Motor neuron (in vitro differentiated cells): ENCODE measurements at regions of chr9 and their contacts with region 1.

Region 1: DNA sequence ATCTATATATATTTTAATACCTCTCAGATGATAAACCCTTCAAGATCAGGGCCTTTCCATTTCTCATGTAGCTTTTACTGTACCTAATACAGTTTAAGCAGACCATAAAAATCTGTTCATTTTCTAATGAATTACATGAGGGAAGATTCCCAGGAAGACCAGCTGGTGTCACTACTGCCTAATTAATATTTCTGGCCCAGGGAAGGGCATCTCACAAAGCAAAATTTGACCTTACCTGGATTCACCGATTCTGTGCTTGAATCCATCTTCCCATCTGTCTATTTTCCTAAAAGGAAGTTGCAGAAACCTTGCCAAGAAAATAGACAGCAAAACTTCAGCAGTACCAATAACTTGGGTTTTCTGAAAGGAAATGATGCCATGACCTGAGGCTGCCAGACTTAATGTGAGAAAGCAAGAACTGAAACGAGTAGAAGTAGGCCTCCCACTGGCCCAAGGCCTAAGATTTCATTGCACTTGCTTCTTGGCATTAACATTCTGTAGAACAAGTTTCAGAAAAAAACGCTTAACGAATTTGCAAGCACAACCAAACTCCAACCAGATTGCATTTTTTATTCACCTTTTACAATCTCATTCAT is 83.0 kb upstream of the GLIS3 start:
- ATAC-seq: peak in 3 of 8 experiments; percentile 28 to 55 (median 29)
- H3K4me3 ChIP-seq: no peak overlapping the region
- H3K27ac ChIP-seq: no peak overlapping the region
- H3K4me1 ChIP-seq: no peaks in the 10 kb centered on the region

Region 2: DNA sequence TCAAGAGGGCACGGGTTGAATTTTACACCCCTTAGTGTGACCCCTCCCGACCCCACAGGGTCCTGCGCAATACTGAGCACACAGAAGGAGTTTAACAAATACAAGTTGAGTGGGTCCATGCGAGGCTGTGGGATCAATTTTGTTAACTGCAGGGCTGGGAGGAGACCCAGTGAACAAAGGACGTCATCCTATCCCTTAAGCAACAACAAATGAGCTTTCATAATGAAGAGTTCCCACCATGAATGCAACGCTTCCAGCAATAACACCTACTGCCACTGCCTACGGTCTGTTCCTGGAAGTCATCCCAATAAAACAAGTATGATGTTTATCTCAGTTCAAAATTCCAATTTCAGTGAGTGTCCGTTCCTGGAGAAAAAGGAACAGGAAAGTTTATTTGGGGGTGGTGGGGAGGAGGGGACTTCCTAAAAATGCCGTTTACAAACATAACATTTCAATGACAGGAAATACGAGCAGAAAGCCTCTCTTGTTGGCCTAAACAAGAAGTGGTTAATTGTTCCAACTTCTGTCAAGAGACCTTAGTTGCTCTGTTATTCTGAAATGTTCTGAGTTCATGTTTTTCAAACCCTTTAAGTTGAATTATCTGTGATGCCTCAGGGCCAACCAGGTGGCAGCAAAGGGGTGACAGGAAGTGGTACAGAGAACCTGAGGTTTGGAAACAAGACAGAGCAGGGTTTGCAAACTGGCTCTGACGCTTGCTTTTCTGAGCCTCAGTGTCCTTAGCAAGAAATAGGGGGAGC is 213.5 kb after region 1 on chr9:
- in situ Hi-C with region 1: loop called in 1 of 9 experiments (anchors 25 kb)
- ATAC-seq: no peak
- H3K4me3 ChIP-seq: no peak overlapping the region
- H3K27ac ChIP-seq: no peak overlapping the region
- H3K4me1 ChIP-seq: no peaks in the 10 kb centered on the region

Region 3: DNA sequence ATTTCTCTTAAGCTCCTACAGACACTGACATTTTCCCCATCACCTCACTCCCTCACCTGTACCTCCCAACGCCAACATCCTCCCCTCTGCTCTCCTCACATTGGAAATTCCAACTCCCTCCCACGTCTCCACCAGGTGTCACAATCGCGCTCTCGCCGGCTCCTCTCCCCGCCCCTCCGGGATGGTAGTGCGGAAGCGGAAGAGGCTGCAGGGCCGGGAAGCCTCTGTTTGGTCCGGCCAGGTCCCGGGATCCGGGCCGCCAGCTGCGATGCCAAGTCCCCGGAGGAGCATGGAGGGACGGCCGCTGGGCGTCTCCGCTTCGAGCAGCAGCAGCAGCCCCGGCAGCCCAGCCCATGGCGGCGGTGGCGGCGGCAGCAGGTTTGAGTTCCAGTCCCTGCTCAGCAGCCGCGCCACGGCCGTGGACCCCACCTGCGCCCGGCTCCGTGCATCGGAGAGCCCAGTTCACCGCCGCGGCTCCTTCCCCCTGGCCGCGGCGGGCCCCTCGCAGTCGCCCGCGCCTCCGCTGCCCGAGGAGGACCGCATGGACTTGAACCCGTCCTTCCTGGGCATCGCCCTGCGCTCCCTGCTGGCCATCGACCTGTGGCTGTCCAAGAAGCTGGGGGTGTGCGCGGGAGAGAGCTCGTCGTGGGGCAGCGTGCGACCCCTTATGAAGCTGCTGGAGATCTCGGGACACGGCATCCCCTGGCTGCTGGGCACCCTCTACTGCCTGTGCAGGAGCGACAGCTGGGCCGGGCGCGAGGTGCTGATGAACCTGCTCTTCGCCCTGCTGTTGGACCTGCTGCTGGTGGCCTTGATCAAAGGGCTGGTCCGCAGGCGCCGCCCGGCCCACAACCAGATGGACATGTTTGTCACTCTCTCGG is 279.5 kb after region 1 on chr9 and contains the start of gene PLPP6:
- in situ Hi-C with region 1: loop called in 1 of 9 experiments (anchors 25 kb)
- ATAC-seq: peak; percentile 84 to 95 (median 88)
- H3K4me3 ChIP-seq: peak within 1 kb of the TSS; percentile 54 to 96 (median 75)
- H3K27ac ChIP-seq: peak within 1 kb of the TSS; percentile 5 to 66
- H3K4me1 ChIP-seq: peaks cover 30 to 40% of the 10 kb centered on the region in 2 donors
- total RNA-seq, gene PLPP6: 8.8 to 13.1 (median 10.5) TPM